Ascending aorta (tissue), 2 donors: ENCODE measurements at regions of chr1 and their contacts with region 1.

Region 1: GRCh38 chr1:20786253-20787028 is 666 bp downstream of the HP1BP3 start:
- DNase-seq: peak; percentile 71 to 96
- H3K4me3 ChIP-seq: peak overlapping the region; percentile 89 to 99
- H3K27ac ChIP-seq: peak overlapping the region; percentile 95 to 99
- H3K4me1 ChIP-seq: peaks cover 6 to 17% of the 10 kb centered on the region in 2 donors
- H3K27me3 ChIP-seq: no peaks in the 10 kb centered on the region
- CTCF ChIP-seq: peak in 1 of 3 experiments; percentile 2

Region 2: DNA sequence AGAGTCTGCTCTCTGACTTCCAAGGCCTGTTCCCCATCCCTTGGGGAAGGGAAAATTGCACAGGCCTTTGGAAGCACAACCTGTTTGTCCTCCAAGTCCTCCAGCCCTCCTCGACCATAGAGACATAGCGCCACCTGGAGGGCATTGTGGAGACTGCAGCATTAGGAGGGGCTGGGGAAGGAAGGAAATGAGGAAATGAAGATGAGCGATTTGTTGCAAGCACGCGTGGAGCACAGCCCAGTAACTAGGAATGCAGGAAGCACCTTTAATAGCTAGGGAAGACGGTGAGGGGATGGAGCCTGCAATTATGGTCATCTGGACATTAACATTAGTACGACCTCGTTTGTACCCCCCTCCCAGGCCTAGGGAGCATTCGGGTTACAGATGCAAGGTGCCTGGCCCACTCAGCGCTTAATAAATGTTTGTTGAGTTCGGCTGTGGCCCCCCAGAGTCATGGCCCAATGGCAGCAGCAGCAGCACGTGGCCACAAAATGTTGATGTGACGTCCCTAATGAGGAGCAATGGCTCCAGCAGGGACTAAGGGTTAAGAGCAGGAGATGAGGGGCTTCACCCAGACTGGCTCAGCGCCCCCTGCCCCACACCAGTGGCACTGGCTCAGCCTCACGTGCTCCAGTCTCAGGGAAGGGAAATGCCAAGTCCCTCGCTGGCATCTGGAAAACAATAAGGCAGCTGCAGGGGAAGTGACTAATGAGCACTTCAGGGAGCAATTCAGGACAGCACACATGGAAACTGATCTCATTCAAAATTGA is 292.4 kb before region 1 on chr1:
- intact Hi-C with region 1: no loop called
- DNase-seq: peak; percentile 35 to 91
- H3K4me3 ChIP-seq: no peak overlapping the region
- H3K27ac ChIP-seq: no peak overlapping the region
- H3K4me1 ChIP-seq: peaks cover 0 to 3% of the 10 kb centered on the region in 2 donors
- H3K27me3 ChIP-seq: no peaks in the 10 kb centered on the region
- CTCF ChIP-seq: peak; percentile 92 to 98 (median 94)

Region 3: GRCh38 chr1:20696397-20697329 is 89.8 kb before region 1 on chr1:
- intact Hi-C with region 1: loop called (anchors 5 kb)
- DNase-seq: peak; percentile 46 to 91
- H3K4me3 ChIP-seq: peak overlapping the region; percentile 67 to 76
- H3K27ac ChIP-seq: peak overlapping the region; percentile 74 to 84
- H3K4me1 ChIP-seq: peaks cover 0 to 2% of the 10 kb centered on the region in 2 donors
- H3K27me3 ChIP-seq: no peaks in the 10 kb centered on the region
- CTCF ChIP-seq: peak; percentile 75 to 91 (median 78)

Region 4: GRCh38 chr1:20732588-20733360 is 53.7 kb before region 1 on chr1 and contains the start of gene SH2D5:
- intact Hi-C with region 1: loop called (anchors 1 kb)
- DNase-seq: peak; percentile 68 to 94
- H3K4me3 ChIP-seq: peak within 1 kb of the TSS; percentile 70 to 85
- H3K27ac ChIP-seq: peak within 1 kb of the TSS; percentile 66 to 85
- H3K4me1 ChIP-seq: peaks cover 7 to 19% of the 10 kb centered on the region in 2 donors
- H3K27me3 ChIP-seq: peaks cover 5% of the 10 kb centered on the region
- CTCF ChIP-seq: peak; percentile 19 to 38 (median 27)
- total RNA-seq, gene SH2D5: not detected

Region 5: GRCh38 chr1:21176586-21177555 is 390.4 kb after region 1 on chr1 and contains the start of gene EIF4G3:
- intact Hi-C with region 1: loop called (anchors 5 kb)
- DNase-seq: peak; percentile 89 to 99
- H3K4me3 ChIP-seq: peak within 1 kb of the TSS; percentile 72 to 84
- H3K27ac ChIP-seq: peak within 1 kb of the TSS; percentile 80 to 87
- H3K4me1 ChIP-seq: peaks cover 3% of the 10 kb centered on the region in 2 donors
- H3K27me3 ChIP-seq: no peaks in the 10 kb centered on the region
- CTCF ChIP-seq: no peak
- total RNA-seq, gene EIF4G3: 33.7 TPM

Region 6: GRCh38 chr1:22052115-22053016 is 1265.9 kb after region 1 on chr1 and contains the start of gene CDC42:
- intact Hi-C with region 1: loop called (anchors 5 kb)
- DNase-seq: peak; percentile 88 to 98
- H3K4me3 ChIP-seq: peak within 1 kb of the TSS; percentile 93 to 100
- H3K27ac ChIP-seq: peak within 1 kb of the TSS; percentile 99
- H3K4me1 ChIP-seq: peaks cover 15 to 29% of the 10 kb centered on the region in 2 donors
- H3K27me3 ChIP-seq: no peaks in the 10 kb centered on the region
- CTCF ChIP-seq: no peak
- total RNA-seq, gene CDC42: 111 TPM

Region 7: DNA sequence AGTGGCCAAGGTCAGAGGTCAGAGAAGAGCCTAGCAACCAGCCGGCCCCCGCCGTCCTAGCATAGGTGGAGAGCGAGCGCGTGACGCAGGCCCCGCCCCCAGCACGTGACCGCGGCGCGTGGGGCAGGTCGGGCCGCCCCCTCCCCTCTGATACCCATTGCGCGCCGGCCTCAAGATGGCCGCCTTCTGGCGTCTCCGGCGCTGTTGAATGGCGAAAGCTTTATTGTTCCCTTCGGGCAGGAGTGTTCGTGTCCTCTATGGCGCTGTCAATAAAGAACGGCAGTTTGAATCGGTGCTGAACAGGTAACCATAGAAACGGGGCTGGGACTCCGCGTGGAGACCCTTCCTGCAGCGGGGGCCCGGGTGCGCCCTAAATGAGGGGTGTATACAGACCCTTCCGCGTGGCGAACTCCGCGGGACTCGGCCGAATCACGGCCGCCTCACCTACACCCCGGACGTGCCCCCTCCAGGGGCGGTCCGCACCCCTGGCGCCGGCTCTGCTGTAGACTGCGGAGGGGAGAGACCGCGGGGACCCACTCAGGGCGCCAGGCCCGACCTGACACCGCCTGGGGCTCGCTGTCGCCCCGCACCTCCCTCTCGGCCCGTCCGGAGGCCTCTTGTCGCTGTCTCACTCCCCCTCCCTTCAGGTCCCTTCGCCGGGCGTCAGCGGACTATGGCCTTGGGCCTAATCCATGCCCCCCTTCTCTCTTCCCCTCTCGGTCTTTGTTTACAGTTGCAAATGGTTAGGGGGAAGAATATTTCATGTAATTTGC is 1665.4 kb after region 1 on chr1 and contains the start of gene ZBTB40:
- intact Hi-C with region 1: loop called (anchors 10 kb)
- DNase-seq: peak; percentile 84 to 98
- H3K4me3 ChIP-seq: peak within 1 kb of the TSS; percentile 98 to 99
- H3K27ac ChIP-seq: peak within 1 kb of the TSS; percentile 96 to 98
- H3K4me1 ChIP-seq: peaks cover 4 to 17% of the 10 kb centered on the region in 2 donors
- H3K27me3 ChIP-seq: no peaks in the 10 kb centered on the region
- CTCF ChIP-seq: no peak
- total RNA-seq, gene ZBTB40: 13.0 TPM